Activated B cell treated with CpG ODN at 0.5 μM for 24 hours (primary cell): ENCODE measurements at regions of chr2 and their contacts with region 1.

Region 1: GRCh38 chr2:65554765-65555591 is 122.6 kb upstream of the SPRED2 start:
- DNase-seq: no peak
- ATAC-seq: peak; percentile 63
- H3K4me3 Mint-ChIP-seq: peak overlapping the region; percentile 42
- H3K27ac Mint-ChIP-seq: no peak overlapping the region
- H3K4me1 Mint-ChIP-seq: peaks cover 27% of the 10 kb centered on the region
- H3K27me3 Mint-ChIP-seq: peaks cover 3% of the 10 kb centered on the region
- CTCF ChIP-seq: no peak

Region 2: DNA sequence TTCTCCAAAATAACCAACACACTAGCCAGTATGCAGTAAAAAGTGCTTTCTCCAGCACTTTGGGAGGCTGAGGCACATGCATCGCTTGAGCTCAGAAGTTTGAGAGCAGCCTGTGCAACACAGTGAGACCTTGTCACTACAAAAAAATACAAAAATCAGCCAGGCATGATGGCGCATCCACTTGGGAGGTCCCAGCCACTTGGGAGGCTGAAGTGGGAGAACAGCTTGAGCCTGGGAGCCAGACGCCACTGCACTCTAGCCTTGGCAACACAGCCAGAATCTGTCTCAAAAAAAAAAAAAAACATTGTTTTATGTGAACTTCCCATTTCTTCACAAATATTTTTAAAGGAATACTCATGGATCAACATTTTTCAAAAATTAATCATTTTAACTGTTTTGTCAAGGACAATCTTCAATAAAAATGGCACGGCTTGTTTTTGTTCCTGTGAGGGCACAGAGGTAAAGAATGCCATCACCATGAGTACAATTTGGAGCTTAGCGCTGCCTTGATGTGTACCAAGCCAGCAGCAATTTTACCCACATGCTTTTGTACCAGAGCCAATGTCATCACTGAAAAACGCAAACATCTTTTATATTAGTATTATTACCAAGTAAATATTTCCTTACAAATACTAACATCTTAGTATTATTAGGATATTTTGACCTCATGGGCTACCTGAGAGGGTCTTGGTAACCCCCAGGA is 451.8 kb before region 1 on chr2:
- CTCF ChIA-PET with region 1: no interaction called
- POLR2A ChIA-PET with region 1: interaction called, 12 read pairs
- intact Hi-C with region 1: no loop called
- DNase-seq: no peak
- ATAC-seq: no peak
- H3K4me3 Mint-ChIP-seq: no peak overlapping the region
- H3K27ac Mint-ChIP-seq: no peak overlapping the region
- H3K4me1 Mint-ChIP-seq: peaks cover 14% of the 10 kb centered on the region
- H3K27me3 Mint-ChIP-seq: no peaks in the 10 kb centered on the region
- CTCF ChIP-seq: no peak

Region 3: DNA sequence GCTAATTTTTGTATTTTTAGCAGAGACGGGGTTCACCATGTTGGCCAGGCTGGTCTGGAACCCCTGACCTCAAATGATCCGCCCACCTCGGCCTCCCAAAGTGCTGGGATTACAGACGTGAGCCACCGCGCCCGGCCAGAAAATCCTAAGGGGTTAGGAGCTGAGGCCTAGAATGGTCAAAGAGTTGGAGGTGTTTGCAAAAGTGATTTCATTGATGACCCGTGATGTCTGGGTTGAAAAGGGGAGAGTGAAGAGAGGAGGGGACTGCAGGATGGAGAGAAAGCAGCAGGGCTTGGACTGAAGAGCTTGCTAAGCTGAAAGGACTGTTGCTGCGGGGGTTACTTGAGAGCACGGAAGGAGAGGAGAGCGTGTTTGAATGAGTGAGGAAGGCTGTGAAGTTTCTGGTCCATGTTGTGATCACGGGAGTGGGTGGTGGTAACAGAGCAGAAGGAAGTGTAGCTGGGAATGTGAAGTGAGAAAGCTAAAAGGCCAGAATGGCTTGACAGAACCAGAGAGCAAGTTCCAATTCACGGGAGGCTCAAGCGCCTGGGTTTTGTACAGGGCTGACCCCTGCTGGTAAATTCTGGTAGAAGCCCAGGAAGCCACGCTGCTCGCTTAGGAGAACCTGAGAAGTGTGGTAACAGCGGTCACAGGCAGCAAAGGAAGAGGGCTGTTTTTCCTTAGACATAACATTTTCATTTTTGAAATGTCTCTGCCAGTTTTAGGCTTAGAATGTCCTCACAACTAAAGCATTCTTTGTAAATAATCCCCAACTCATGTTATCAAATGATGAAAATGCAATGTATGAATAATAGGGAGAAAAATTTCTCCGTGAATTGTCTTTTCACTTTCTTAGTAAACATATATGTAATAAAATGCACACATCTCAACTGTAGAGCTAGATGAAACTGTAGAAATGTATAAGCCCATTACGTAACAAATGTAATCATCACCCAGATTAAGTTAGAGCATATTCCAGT is 367.8 kb before region 1 on chr2:
- CTCF ChIA-PET with region 1: no interaction called
- POLR2A ChIA-PET with region 1: no interaction called
- intact Hi-C with region 1: loop called (anchors 10 kb)
- DNase-seq: peak; percentile 38
- ATAC-seq: peak; percentile 91
- H3K4me3 Mint-ChIP-seq: no peak overlapping the region
- H3K27ac Mint-ChIP-seq: no peak overlapping the region
- H3K4me1 Mint-ChIP-seq: peaks cover 4% of the 10 kb centered on the region
- H3K27me3 Mint-ChIP-seq: peaks cover 11% of the 10 kb centered on the region
- CTCF ChIP-seq: no peak

Region 4: GRCh38 chr2:65264821-65265670 is 289.9 kb before region 1 on chr2:
- CTCF ChIA-PET with region 1: interaction called, 7 read pairs
- POLR2A ChIA-PET with region 1: no interaction called
- intact Hi-C with region 1: loop called (anchors 1 kb)
- DNase-seq: no peak
- ATAC-seq: peak; percentile 25
- H3K4me3 Mint-ChIP-seq: no peak overlapping the region
- H3K27ac Mint-ChIP-seq: peak overlapping the region; percentile 12
- H3K4me1 Mint-ChIP-seq: peaks cover 8% of the 10 kb centered on the region
- H3K27me3 Mint-ChIP-seq: no peaks in the 10 kb centered on the region
- CTCF ChIP-seq: no peak

Region 5: GRCh38 chr2:65382776-65383357 is 172.1 kb before region 1 on chr2:
- CTCF ChIA-PET with region 1: no interaction called
- POLR2A ChIA-PET with region 1: no interaction called
- intact Hi-C with region 1: loop called (anchors 1 kb)
- DNase-seq: peak; percentile 40
- ATAC-seq: peak; percentile 78
- H3K4me3 Mint-ChIP-seq: peak overlapping the region; percentile 61
- H3K27ac Mint-ChIP-seq: peak overlapping the region; percentile 72
- H3K4me1 Mint-ChIP-seq: peaks cover 41% of the 10 kb centered on the region
- H3K27me3 Mint-ChIP-seq: peaks cover 5% of the 10 kb centered on the region
- CTCF ChIP-seq: no peak